ENCODE measurements at regions of chr15 and their contacts with region 1.

Region 1: GRCh38 chr15:45457641-45458433 is 64.7 kb downstream of the SLC30A4 start:
- DNase-seq: peak; percentile 12
- H3K4me3 ChIP-seq: peak overlapping the region; percentile 10 to 62 (median 46)
- H3K27ac ChIP-seq: peak overlapping the region; percentile 27 to 86 (median 70)
- H3K4me1 ChIP-seq: peaks cover 19 to 43% (median 21%) of the 10 kb centered on the region in 3 donors
- H3K27me3 ChIP-seq: no peaks in the 10 kb centered on the region
- CTCF ChIP-seq: peak; percentile 78 to 96 (median 87)
- POLR2A ChIP-seq: no peak

Region 2: GRCh38 chr15:45611305-45611704 is 153.5 kb after region 1 on chr15:
- intact Hi-C with region 1: loop called (anchors 5 kb)
- DNase-seq: no peak
- H3K4me3 ChIP-seq: no peak overlapping the region
- H3K27ac ChIP-seq: no peak overlapping the region
- H3K4me1 ChIP-seq: peaks cover 0 to 9% (median 0%) of the 10 kb centered on the region in 3 donors
- H3K27me3 ChIP-seq: no peaks in the 10 kb centered on the region
- CTCF ChIP-seq: peak in 4 of 6 experiments; percentile 14 to 40 (median 24)
- POLR2A ChIP-seq: no peak

Measured in esophagus squamous epithelium (tissue), 5 donors.